H1 (cell line): ENCODE measurements at regions of chr12 and their contacts with region 1.

Region 1: DNA sequence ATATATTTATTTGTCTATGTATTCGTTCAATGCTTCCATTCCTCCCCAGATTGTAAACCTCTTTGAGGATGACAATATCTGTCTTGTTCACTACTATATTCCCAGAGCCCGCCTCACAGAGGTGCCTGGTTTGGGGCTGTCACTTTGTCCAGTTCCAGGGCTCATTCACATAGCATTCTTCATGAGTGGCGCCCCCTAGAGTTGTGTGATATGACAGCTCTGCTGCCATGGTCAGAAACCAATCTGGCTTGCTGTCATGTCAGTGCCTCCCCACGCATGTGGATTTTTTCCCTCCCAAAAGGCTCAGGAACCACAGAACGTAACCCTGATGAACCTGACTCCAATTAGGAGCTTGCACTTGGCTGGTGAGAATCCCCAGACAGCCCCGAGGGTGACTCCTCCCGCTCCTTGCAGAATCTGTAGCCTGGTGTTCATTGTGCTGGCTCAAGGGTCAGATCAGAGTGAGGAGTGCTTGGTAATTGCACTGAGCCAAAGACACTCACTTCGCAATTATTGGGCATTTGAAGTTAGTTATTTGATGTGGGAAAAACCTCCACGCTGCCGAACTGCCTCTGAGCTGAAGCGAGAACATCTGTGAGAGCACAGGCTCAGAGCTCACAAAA is 145.5 kb downstream of the PTPN11 start:
- DNase-seq: peak in 1 of 2 experiments; percentile 56
- H3K4me3 ChIP-seq: no peak overlapping the region
- H3K27ac ChIP-seq: no peak overlapping the region
- H3K4me1 ChIP-seq: no peaks in the 10 kb centered on the region
- H3K27me3 ChIP-seq: 0 out of 7 replicates have a peak, but pooled peaks cover 0 to 3% (median 0%) of the 10 kb centered on the region in 4 experiments
- CTCF ChIP-seq: peak; percentile 25 to 61 (median 35)
- EP300 ChIP-seq: no peak
- POLR2A ChIP-seq: no peak
- RAD21 ChIP-seq: peak; percentile 10 to 35; a peak in 2 of 4 replicates

Region 2: GRCh38 chr12:112549031-112549430 is 15.2 kb before region 1 on chr12:
- CTCF ChIA-PET with region 1: interaction called, 18 read pairs
- POLR2A ChIA-PET with region 1: no interaction called
- DNase-seq: no peak
- H3K4me3 ChIP-seq: no peak overlapping the region
- H3K27ac ChIP-seq: no peak overlapping the region
- H3K4me1 ChIP-seq: no peaks in the 10 kb centered on the region
- H3K27me3 ChIP-seq: no peaks in the 10 kb centered on the region
- CTCF ChIP-seq: no peak
- EP300 ChIP-seq: no peak
- POLR2A ChIP-seq: no peak
- RAD21 ChIP-seq: no peak

Region 3: GRCh38 chr12:112590281-112590680 is 26.0 kb after region 1 on chr12:
- CTCF ChIA-PET with region 1: no interaction called
- POLR2A ChIA-PET with region 1: no interaction called
- DNase-seq: peak; percentile 56 to 61
- H3K4me3 ChIP-seq: no peak overlapping the region
- H3K27ac ChIP-seq: no peak overlapping the region
- H3K4me1 ChIP-seq: peaks cover 0 to 3% (median under 1%) of the 10 kb centered on the region in 4 experiments; a peak in 2 of 7 replicates
- H3K27me3 ChIP-seq: peaks cover 40 to 89% (median 79%) of the 10 kb centered on the region in 4 experiments
- CTCF ChIP-seq: no peak
- EP300 ChIP-seq: peak in 1 of 2 experiments; percentile 89; a peak in 1 of 3 replicates
- POLR2A ChIP-seq: no peak
- RAD21 ChIP-seq: peak in 1 of 2 experiments; percentile 10; a peak in 1 of 4 replicates

Region 4: DNA sequence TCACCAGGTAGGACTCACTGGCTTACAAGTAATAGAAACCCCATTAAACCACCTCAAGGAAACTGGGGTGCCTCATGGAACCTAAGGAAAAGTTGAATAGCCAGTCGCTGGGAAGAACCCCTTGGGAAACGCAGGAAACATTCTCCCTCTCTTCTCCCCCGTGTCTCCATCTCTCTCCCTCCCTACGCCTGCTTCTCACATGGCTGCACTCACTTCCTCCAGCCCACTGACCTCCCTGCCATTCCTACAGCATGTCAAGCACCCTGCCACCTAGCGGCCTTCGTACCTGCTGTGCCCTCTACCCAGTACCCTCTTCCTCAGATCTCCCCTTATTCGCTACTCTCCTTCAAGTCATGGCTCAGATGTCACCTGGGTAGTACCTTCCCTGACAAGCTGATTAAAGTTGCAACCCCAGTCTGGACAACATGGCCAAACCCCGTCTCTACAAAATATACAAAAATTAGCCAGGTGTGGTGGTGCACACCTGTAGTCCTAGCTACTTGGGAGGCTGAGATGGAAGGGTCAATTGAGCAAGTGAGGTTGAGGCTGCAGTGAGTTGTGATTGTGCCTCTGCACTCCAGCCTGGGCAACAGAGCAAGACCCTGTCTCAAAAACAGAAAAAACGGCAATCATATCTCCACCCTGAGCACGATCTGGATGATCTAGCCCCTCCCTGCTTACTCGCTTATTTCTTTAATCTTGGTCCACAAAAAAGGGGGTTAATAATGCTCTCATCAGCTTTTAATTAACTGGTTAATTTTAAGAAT is 485.9 kb after region 1 on chr12:
- CTCF ChIA-PET with region 1: no interaction called
- POLR2A ChIA-PET with region 1: no interaction called
- DNase-seq: peak in 1 of 2 experiments; percentile 72
- H3K4me3 ChIP-seq: no peak overlapping the region
- H3K27ac ChIP-seq: no peak overlapping the region
- H3K4me1 ChIP-seq: no peaks in the 10 kb centered on the region; a peak in 2 of 7 replicates
- H3K27me3 ChIP-seq: peaks cover 0 to 2% (median 2%) of the 10 kb centered on the region in 4 experiments; a peak in 4 of 7 replicates
- CTCF ChIP-seq: peak; percentile 70 to 91 (median 89)
- EP300 ChIP-seq: no peak
- POLR2A ChIP-seq: no peak
- RAD21 ChIP-seq: peak; percentile 35 to 51

Region 5: DNA sequence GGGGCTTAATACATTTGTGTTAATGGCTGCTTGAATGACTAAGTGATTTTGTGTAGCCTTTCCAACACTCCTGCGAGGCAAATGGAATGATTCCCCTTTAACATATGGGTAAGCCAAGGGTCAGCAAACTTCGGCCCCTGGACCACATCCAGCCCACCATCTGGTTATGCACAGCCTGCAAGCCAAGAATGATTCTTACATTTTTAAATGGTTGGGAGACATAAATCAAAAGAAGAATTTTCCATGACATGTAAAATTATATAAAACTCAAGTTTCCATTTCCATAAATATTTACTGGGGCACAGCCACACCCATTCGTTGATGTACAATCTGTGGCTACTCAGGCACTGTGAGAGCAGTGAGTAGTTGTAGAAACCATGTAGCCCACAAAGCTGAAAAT is 761.6 kb after region 1 on chr12:
- CTCF ChIA-PET with region 1: no interaction called
- POLR2A ChIA-PET with region 1: no interaction called
- DNase-seq: no peak
- H3K4me3 ChIP-seq: no peak overlapping the region
- H3K27ac ChIP-seq: no peak overlapping the region
- H3K4me1 ChIP-seq: 0 out of 7 replicates have a peak, but pooled peaks cover 0 to 2% (median 0%) of the 10 kb centered on the region in 4 experiments
- H3K27me3 ChIP-seq: no peaks in the 10 kb centered on the region
- CTCF ChIP-seq: no peak
- EP300 ChIP-seq: no peak
- POLR2A ChIP-seq: no peak
- RAD21 ChIP-seq: no peak